Panc1 (cell line): ENCODE measurements at regions of chr11 and their contacts with region 1.

Region 1: GRCh38 chr11:44139565-44140330 is 44.3 kb downstream of the EXT2 start:
- DNase-seq: no peak
- ATAC-seq: no peak
- H3K4me3 ChIP-seq: no peak overlapping the region
- H3K27ac ChIP-seq: peak overlapping the region; percentile 24; the same call in 1 of the 2 replicates
- H3K4me1 ChIP-seq: peaks cover 26% of the 10 kb centered on the region
- H3K27me3 ChIP-seq: no peaks in the 10 kb centered on the region
- CTCF ChIP-seq: no peak

Region 2: GRCh38 chr11:44120169-44120568 is 19.6 kb before region 1 on chr11:
- CTCF ChIA-PET with region 1: interaction called, 12 read pairs
- POLR2A ChIA-PET with region 1: no interaction called
- in situ Hi-C with region 1: no loop called
- intact Hi-C with region 1: no loop called
- DNase-seq: no peak
- ATAC-seq: peak; percentile 79
- H3K4me3 ChIP-seq: no peak overlapping the region
- H3K27ac ChIP-seq: no peak overlapping the region
- H3K4me1 ChIP-seq: no peaks in the 10 kb centered on the region
- H3K27me3 ChIP-seq: no peaks in the 10 kb centered on the region
- CTCF ChIP-seq: peak; percentile 64